Activated CD4-positive, alpha-beta T cell treated with anti-CD3 and anti-CD28 coated beads for 36 hours (primary cell): ENCODE measurements at regions of chr10 and their contacts with region 1.

Region 1: DNA sequence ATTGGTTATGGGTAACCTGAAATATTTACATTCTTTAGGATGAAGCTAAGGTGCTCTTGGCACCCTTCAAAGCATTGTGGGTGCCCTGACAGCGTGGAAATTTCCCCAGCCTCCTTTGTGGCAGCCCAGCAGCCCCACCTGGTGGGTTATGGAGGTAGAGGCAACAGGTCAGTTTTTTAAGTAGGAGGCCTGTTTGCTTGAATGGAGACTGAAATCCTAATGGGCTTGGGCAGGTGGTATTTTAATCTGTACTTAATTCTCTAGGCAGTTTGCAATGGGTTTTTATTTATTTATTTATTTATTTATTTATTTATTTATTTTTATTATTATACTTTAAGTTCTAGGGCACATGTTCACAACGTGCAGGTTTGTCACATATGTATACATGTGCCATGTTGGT is 139.4 kb downstream of the EPC1 start:
- DNase-seq: peak; percentile 81
- ATAC-seq: peak; percentile 77
- H3K4me3 Mint-ChIP-seq: no peak overlapping the region
- H3K27ac Mint-ChIP-seq: no peak overlapping the region
- H3K4me1 Mint-ChIP-seq: peaks cover 2% of the 10 kb centered on the region
- H3K27me3 Mint-ChIP-seq: no peaks in the 10 kb centered on the region

Region 2: GRCh38 chr10:31836569-31837406 is 370.8 kb before region 1 on chr10:
- CTCF ChIA-PET with region 1: no interaction called
- POLR2A ChIA-PET with region 1: no interaction called
- intact Hi-C with region 1: loop called in 1 of 2 experiments (anchors 2 kb)
- DNase-seq: peak; percentile 31
- ATAC-seq: peak; percentile 57
- H3K4me3 Mint-ChIP-seq: no peak overlapping the region
- H3K27ac Mint-ChIP-seq: no peak overlapping the region
- H3K4me1 Mint-ChIP-seq: peaks cover 14% of the 10 kb centered on the region
- H3K27me3 Mint-ChIP-seq: no peaks in the 10 kb centered on the region

Region 3: GRCh38 chr10:32190890-32191491 is 16.6 kb before region 1 on chr10:
- CTCF ChIA-PET with region 1: interaction called, 4 read pairs
- POLR2A ChIA-PET with region 1: no interaction called
- intact Hi-C with region 1: loop called (anchors 1 to 2 kb)
- DNase-seq: no peak
- ATAC-seq: no peak
- H3K4me3 Mint-ChIP-seq: no peak overlapping the region
- H3K27ac Mint-ChIP-seq: no peak overlapping the region
- H3K4me1 Mint-ChIP-seq: peaks cover 2% of the 10 kb centered on the region
- H3K27me3 Mint-ChIP-seq: no peaks in the 10 kb centered on the region

Region 4: DNA sequence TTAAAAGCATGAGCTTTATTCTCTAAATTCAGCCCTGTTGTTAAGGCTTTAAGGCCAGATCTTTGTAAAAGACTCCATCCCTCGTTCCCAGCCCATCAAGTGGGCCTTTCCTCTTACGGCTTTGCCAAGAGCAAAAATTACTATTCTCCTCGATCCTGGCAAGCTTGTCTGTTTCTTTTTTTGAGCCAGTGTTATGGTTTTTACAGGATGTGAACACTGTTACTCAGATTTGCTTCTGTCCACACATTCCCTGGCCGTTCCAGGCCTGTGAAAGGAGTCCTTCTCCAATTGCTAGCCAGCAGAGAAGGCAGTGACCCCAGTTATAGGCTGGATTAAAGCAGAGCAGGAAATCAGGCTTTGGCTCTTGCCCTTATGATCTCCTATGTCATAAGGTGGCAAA is 186.4 kb after region 1 on chr10:
- CTCF ChIA-PET with region 1: no interaction called
- POLR2A ChIA-PET with region 1: no interaction called
- intact Hi-C with region 1: no loop called
- DNase-seq: no peak
- ATAC-seq: no peak
- H3K4me3 Mint-ChIP-seq: no peak overlapping the region
- H3K27ac Mint-ChIP-seq: no peak overlapping the region
- H3K4me1 Mint-ChIP-seq: peaks cover 1% of the 10 kb centered on the region
- H3K27me3 Mint-ChIP-seq: no peaks in the 10 kb centered on the region

Region 5: DNA sequence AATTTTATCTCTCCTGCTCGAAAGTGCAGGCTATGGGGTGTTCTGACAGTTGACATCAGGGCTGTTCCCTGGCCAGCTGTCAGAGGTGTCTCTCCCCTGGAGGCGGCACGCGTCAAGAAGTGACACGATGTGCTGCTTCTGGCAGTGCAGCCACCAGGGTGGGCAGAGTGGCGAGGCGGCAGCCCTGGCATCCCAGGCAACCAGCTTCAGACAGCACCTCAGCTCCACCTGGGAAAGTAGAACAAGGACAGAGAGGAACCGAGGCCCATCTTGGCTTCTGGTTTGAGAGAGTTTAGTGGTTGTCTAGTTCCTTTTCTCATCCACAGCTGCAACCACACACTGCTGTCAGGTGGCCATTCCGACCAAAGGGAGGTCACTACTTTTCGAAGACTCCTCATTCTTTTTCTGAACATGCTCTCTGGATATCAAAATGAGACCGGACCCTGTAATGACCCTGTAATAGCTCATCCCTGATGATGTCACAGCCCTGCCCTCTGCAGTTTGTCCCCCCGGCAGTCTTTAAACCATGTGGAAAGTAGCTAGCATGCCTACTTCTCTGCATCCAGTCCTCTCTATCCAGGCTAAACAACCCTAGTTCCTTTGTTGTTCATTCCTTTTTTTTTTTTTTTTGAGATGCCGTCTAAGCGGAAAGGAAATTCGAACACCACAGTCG is 1507.9 kb after region 1 on chr10:
- CTCF ChIA-PET with region 1: no interaction called
- POLR2A ChIA-PET with region 1: no interaction called
- intact Hi-C with region 1: no loop called
- DNase-seq: no peak
- ATAC-seq: no peak
- H3K4me3 Mint-ChIP-seq: no peak overlapping the region
- H3K27ac Mint-ChIP-seq: no peak overlapping the region
- H3K4me1 Mint-ChIP-seq: no peaks in the 10 kb centered on the region
- H3K27me3 Mint-ChIP-seq: peaks cover 2% of the 10 kb centered on the region